Activated CD4-positive, alpha-beta T cell treated with anti-CD3 and anti-CD28 coated beads, Interleukin-2, amount 10 ng/mL, durations not matched to agents 7 days and 5 days (primary cell): ENCODE measurements at regions of chr17 and their contacts with region 1.

Region 1: GRCh38 chr17:7234083-7234951 is at the start of gene DVL2:
- DNase-seq: peak; percentile 95
- H3K4me3 Mint-ChIP-seq: peak within 1 kb of the TSS; percentile 96
- H3K27ac Mint-ChIP-seq: peak within 1 kb of the TSS; percentile 88
- H3K4me1 Mint-ChIP-seq: peaks cover 49% of the 10 kb centered on the region
- H3K27me3 Mint-ChIP-seq: no peaks in the 10 kb centered on the region
- total RNA-seq, gene DVL2: 53.2 TPM

Region 2: DNA sequence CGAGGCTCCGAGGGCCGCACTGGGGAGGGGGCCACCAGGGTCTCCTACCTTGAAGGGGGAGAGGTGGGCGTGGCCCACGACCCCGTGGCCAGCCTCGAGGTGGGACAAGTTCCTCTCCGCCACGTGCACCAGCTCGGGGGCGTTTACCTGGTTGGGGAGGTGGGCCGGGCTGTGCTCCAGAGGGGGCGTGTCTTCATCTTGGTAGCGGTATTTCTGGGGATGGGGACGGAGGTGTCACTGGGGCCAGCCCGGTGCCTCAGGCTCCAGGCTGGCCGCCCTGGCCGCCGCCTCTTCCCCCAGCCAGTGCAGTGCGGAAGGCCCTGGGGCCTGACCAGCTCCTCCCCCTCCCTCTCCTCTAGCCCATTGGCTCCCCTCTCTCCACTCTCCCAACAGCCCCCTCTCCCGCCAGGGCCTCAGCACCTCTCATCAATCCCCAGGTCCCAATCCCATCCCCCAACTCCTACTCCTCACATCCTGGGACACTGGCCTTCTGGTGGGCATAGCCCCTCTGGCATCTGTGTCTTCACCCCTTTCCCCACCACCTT is 26.2 kb before region 1 on chr17:
- CTCF ChIA-PET with region 1: no interaction called
- POLR2A ChIA-PET with region 1: no interaction called
- DNase-seq: no peak
- H3K4me3 Mint-ChIP-seq: no peak overlapping the region
- H3K27ac Mint-ChIP-seq: no peak overlapping the region
- H3K4me1 Mint-ChIP-seq: peaks cover 47% of the 10 kb centered on the region
- H3K27me3 Mint-ChIP-seq: peaks cover 15% of the 10 kb centered on the region

Region 3: GRCh38 chr17:7219812-7220581 is 14.3 kb before region 1 on chr17 and contains the starts of genes ACADVL and DLG4:
- CTCF ChIA-PET with region 1: interaction called, 16 read pairs
- POLR2A ChIA-PET with region 1: interaction called, 3 read pairs
- DNase-seq: peak; percentile 74
- H3K4me3 Mint-ChIP-seq: peak within 1 kb of the TSS; percentile 91
- H3K27ac Mint-ChIP-seq: peak within 1 kb of the TSS; percentile 89
- H3K4me1 Mint-ChIP-seq: peaks cover 56% of the 10 kb centered on the region
- H3K27me3 Mint-ChIP-seq: no peaks in the 10 kb centered on the region
- total RNA-seq, gene ACADVL: 338 to 370 TPM
- total RNA-seq, gene DLG4: 9.4 to 9.5 TPM

Region 4: DNA sequence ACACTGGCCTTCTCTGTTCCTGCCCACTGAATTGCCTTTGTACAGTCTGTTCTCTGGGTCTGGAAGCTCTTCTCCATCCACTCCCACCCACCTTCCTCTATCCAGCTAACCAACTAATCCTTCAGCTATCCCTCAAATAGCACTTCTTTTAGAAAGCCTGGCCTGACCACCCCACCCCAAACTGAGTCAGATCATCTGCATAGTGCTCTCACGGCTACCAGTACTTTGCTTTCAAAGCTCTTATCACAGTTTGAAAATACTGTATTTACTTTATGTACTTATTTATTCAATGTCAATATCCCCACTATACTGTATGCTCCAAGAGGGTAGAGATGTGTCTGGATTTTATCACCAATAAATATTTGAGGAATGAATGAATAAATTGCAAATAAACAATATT is 32.5 kb after region 1 on chr17:
- CTCF ChIA-PET with region 1: no interaction called
- POLR2A ChIA-PET with region 1: no interaction called
- DNase-seq: no peak
- H3K4me3 Mint-ChIP-seq: no peak overlapping the region
- H3K27ac Mint-ChIP-seq: no peak overlapping the region
- H3K4me1 Mint-ChIP-seq: peaks cover 19% of the 10 kb centered on the region
- H3K27me3 Mint-ChIP-seq: peaks cover 38% of the 10 kb centered on the region

Region 5: GRCh38 chr17:7363311-7363710 is 129.0 kb after region 1 on chr17:
- CTCF ChIA-PET with region 1: no interaction called
- POLR2A ChIA-PET with region 1: no interaction called
- DNase-seq: no peak
- H3K4me3 Mint-ChIP-seq: no peak overlapping the region
- H3K27ac Mint-ChIP-seq: no peak overlapping the region
- H3K4me1 Mint-ChIP-seq: no peaks in the 10 kb centered on the region
- H3K27me3 Mint-ChIP-seq: no peaks in the 10 kb centered on the region